ENCODE measurements at regions of chr12 and their contacts with region 1.

Region 1: DNA sequence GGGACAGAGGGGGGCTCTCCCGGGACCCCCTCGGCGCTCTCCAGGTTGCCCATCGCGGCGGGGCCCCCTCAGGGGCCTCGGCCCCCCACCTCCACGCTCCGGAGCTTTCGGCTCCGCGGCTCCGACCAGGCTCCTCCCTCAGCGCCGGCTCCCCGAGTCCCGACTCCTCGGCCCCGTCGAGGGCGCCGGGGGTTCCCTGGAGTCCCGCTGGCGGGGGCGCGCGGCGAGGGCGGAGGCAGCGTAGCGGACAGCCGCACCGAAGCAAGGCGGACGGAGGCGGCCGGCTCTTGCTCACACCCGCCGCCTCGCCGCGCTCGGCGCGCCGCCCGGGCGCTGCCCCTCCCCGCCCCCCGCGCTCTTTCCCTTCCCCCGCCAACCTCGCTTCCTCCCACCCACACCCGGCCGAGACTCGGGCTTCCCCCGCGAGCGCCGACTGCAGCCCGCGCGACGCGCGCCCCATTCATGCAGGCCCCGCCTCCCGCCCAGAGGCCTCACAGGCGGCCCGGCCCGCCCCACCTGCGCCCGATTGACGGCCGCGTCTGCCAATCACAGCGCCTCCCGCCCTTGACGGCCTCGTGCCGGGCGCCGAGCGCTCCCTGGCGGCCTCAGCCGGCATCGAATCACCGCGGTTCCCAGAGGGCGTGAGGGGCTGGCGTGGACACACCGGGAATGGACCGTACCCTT is at the start of gene FMNL3:
- DNase-seq: peak; percentile 99
- ATAC-seq: peak; percentile 87 to 98 (median 91)
- H3K4me3 ChIP-seq: peak within 1 kb of the TSS; percentile 85
- H3K4me3 Mint-ChIP-seq: peak within 1 kb of the TSS; percentile 93
- H3K27ac ChIP-seq: peak within 1 kb of the TSS; percentile 90
- H3K27ac Mint-ChIP-seq: peak within 1 kb of the TSS; percentile 84 to 86
- H3K4me1 ChIP-seq: peaks cover 42% of the 10 kb centered on the region
- H3K4me1 Mint-ChIP-seq: peaks cover 42 to 47% of the 10 kb centered on the region in 2 donors
- H3K27me3 ChIP-seq: no peaks in the 10 kb centered on the region
- H3K27me3 Mint-ChIP-seq: peaks cover 5 to 21% of the 10 kb centered on the region in 2 donors
- CTCF ChIP-seq: peak; percentile 97
- total RNA-seq, gene FMNL3: 54.2 to 82.6 (median 58.7) TPM

Region 2: GRCh38 chr12:49636979-49637755 is 70.1 kb before region 1 on chr12:
- intact Hi-C with region 1: loop called (anchors 2 kb)
- DNase-seq: peak; percentile 34 to 76
- ATAC-seq: peak; percentile 76 to 98 (median 94)
- H3K4me3 ChIP-seq: no peak overlapping the region
- H3K4me3 Mint-ChIP-seq: no peak overlapping the region
- H3K27ac ChIP-seq: no peak overlapping the region
- H3K27ac Mint-ChIP-seq: peak overlapping the region in 1 of 2 donors; percentile 29
- H3K4me1 ChIP-seq: peaks cover 25% of the 10 kb centered on the region
- H3K4me1 Mint-ChIP-seq: peaks cover 20 to 25% of the 10 kb centered on the region in 2 donors
- H3K27me3 ChIP-seq: no peaks in the 10 kb centered on the region
- H3K27me3 Mint-ChIP-seq: no peaks in the 10 kb centered on the region
- CTCF ChIP-seq: peak; percentile 67

Region 3: GRCh38 chr12:49644620-49644994 is 62.7 kb before region 1 on chr12:
- intact Hi-C with region 1: loop called (anchors 1 kb)
- DNase-seq: peak; percentile 80 to 93
- ATAC-seq: peak; percentile 88 to 100 (median 96)
- H3K4me3 ChIP-seq: no peak overlapping the region
- H3K4me3 Mint-ChIP-seq: no peak overlapping the region
- H3K27ac ChIP-seq: peak overlapping the region; percentile 41
- H3K27ac Mint-ChIP-seq: peak overlapping the region; percentile 67 to 89
- H3K4me1 ChIP-seq: peaks cover 13% of the 10 kb centered on the region
- H3K4me1 Mint-ChIP-seq: peaks cover 22 to 50% of the 10 kb centered on the region in 2 donors
- H3K27me3 ChIP-seq: no peaks in the 10 kb centered on the region
- H3K27me3 Mint-ChIP-seq: no peaks in the 10 kb centered on the region
- CTCF ChIP-seq: peak; percentile 97

Region 4: DNA sequence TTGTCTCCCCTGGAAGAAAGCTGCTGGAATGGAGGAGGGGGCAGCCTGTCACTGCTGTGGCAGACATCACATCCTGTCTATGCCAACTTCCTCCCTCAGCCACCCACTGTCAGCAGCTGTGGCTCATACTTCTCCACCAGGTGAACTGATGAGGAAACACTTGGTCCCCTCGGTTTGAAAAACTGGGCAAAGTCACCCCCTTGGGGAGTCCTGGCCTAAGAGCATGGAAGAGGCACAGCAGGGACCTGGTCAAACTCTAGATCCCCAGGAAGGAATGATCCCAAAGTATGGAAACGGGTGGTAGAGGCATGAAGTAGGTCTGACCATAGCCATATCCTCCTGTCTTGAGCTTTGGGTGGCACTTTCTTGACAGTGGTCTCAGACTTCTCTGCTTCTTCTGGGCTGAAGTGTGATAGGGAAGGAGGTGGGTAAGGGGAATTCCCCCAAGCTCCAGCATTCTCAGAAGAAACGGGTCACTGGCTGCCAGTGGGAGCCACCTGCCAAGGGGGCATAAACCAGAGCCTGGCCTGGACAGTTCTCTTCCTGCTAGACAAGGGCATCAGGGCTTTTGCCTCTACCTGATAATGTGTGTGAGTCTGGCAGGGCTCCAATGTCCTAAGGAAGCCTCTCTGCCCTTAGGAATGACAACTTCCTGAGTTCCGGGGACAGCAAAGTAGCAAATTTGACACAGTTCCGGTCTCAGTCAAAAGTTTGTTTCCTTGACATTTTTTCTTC is 36.1 kb before region 1 on chr12:
- intact Hi-C with region 1: loop called (anchors 2 kb)
- DNase-seq: peak; percentile 48 to 87
- ATAC-seq: peak; percentile 73 to 84 (median 82)
- H3K4me3 ChIP-seq: no peak overlapping the region
- H3K4me3 Mint-ChIP-seq: peak overlapping the region; percentile 74
- H3K27ac ChIP-seq: peak overlapping the region; percentile 91
- H3K27ac Mint-ChIP-seq: peak overlapping the region; percentile 89 to 92
- H3K4me1 ChIP-seq: peaks cover 66% of the 10 kb centered on the region
- H3K4me1 Mint-ChIP-seq: peaks cover 82 to 97% of the 10 kb centered on the region in 2 donors
- H3K27me3 ChIP-seq: no peaks in the 10 kb centered on the region
- H3K27me3 Mint-ChIP-seq: no peaks in the 10 kb centered on the region
- CTCF ChIP-seq: no peak

Measured in natural killer cell (primary cell).